ENCODE measurements at regions of chr14 and their contacts with region 1.

Region 1: GRCh38 chr14:30656190-30656632 is 34.1 kb downstream of the SCFD1 start:
- DNase-seq: no peak

Region 2: DNA sequence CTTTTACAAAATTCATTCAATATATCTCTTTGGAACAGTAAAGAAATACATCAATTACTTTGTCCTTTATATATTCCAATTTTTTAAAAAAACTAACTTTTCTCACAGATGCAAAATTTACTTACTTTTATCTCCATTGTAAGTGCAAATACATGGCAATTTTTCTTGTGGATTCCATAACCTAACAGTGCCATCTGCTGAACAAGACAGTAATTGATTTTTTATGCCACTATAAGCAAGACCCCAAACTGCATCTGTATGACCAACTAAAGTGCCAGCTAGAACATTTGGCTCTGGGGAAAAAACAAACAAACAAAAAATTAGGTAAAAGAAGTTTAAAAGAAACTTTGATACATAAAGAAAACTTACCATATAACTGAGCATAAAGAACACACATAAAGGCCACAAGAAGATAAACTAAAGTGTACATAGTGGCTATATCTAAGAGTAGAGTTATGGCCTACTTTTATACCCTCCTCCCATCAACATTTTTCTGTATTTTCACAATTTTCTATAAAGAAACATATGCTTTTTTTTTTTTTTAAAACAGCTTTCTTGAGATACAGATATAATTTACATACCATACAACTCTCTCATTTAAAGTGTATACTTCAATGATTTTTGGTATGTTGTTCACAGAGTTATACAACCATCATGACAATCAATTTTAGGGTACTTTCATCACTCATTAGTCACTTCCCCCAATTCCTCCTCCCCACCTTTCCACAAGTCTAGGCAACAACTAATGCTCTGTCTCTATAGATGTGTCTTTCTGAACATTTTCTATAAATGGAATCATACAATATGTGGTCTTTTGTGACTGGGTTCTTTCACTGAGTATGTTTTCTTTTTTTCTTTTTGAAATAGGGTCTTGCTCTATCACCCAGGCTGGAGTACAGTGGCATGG is 250.8 kb after region 1 on chr14:
- intact Hi-C with region 1: loop called (anchors 5 kb)
- DNase-seq: no peak

Measured in cardiac septum (tissue), 1 donor.